Activated CD4-positive, alpha-beta memory T cell treated with anti-CD3 and anti-CD28 coated beads for 36 hours (primary cell): ENCODE measurements at regions of chr1 and their contacts with region 1.

Region 1: GRCh38 chr1:24586970-24587820 is 31.3 kb downstream of the NCMAP start:
- DNase-seq: peak; percentile 49
- H3K4me3 Mint-ChIP-seq: no peak overlapping the region
- H3K27ac Mint-ChIP-seq: peak overlapping the region; percentile 31
- H3K4me1 Mint-ChIP-seq: peaks cover 5% of the 10 kb centered on the region
- H3K27me3 Mint-ChIP-seq: peaks cover 2% of the 10 kb centered on the region

Region 2: DNA sequence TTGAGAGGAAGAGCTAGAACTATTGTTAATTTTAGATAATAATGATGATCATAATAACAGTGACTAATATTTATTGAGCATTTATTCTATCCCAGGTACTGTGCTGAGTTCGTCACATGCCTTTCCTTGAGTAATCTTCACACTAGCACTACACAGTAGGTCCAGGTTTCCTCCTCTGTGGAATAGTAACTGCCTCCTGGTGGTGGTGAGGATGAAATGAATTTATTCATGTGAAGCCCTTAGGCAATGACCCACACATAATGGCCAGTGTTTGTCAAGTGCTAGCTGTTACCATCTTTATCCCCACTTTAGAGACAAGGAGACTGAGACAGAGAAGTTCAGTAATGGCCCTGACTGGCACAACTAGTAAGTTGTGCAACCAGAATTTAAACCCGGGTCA is 165.7 kb before region 1 on chr1:
- CTCF ChIA-PET with region 1: interaction called, 107 read pairs
- POLR2A ChIA-PET with region 1: no interaction called
- intact Hi-C with region 1: no loop called
- DNase-seq: no peak
- H3K4me3 Mint-ChIP-seq: no peak overlapping the region
- H3K27ac Mint-ChIP-seq: no peak overlapping the region
- H3K4me1 Mint-ChIP-seq: peaks cover 66% of the 10 kb centered on the region
- H3K27me3 Mint-ChIP-seq: no peaks in the 10 kb centered on the region

Region 3: DNA sequence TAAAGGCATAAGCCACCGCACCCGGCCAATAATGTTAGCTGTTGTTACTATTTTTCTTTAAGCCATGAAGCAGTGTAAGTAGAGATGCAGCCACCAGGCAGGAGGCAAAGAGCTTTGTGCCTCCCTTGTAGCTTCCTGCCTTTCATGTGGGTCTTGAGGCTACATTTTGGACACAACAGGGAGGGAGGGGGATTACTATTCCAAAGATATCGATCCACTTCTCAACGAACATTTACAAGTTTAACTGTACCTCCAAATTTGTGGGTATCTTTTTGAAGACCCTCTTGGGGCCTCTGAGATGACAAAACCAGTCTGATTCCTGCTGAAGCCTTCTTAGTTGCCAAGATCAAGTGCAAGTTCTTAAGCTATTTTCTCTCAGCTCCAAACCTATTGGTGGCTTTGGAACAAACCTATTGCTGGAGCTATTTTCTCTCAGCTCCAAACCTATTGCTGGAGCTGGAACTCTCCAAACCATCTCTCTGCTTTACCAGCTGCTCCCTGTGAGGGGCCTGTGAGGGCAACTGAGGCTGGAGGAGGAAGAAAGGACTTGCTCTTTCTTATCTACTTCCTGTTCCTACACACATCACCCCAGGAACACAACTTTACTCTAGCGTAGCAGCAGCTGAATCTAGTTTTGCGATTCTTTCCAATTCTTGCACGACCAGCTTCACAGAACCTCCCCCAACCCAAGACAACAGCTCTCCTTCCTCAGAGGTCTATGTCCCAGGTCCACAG is 100.7 kb before region 1 on chr1:
- CTCF ChIA-PET with region 1: interaction called, 14 read pairs
- POLR2A ChIA-PET with region 1: no interaction called
- intact Hi-C with region 1: no loop called
- DNase-seq: peak; percentile 47
- H3K4me3 Mint-ChIP-seq: peak overlapping the region; percentile 72
- H3K27ac Mint-ChIP-seq: peak overlapping the region; percentile 95
- H3K4me1 Mint-ChIP-seq: peaks cover 78% of the 10 kb centered on the region
- H3K27me3 Mint-ChIP-seq: no peaks in the 10 kb centered on the region

Region 4: DNA sequence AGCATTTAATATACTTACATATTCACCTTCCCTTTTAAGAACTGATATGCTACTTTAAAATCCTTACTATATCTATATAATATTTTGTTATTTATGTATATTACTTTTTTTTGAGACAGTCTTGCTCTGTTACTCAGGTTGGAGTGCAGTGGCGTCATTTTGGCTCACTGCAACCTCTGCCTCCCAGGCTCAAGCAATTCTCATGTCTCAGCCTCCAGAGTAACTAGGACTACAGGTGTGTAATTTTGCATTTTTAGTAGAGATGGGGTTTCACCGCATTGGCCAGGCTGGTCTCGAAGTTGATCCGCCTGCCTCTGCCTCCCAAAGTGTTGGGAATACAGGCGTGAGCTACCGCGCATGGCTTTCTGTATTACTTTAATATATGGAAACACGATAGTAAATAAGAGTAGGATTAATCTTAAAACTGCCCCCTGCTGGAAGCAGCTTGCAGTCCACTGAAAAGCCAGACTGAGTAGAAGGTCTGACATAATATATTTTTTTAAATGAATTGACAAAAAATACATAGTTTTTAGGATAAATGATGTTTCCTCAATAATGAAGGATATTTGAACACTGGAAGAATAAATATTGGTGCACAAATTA is 60.2 kb before region 1 on chr1:
- CTCF ChIA-PET with region 1: interaction called, 21 read pairs
- POLR2A ChIA-PET with region 1: no interaction called
- intact Hi-C with region 1: no loop called
- DNase-seq: peak; percentile 58
- H3K4me3 Mint-ChIP-seq: no peak overlapping the region
- H3K27ac Mint-ChIP-seq: no peak overlapping the region
- H3K4me1 Mint-ChIP-seq: peaks cover 57% of the 10 kb centered on the region
- H3K27me3 Mint-ChIP-seq: no peaks in the 10 kb centered on the region

Region 5: GRCh38 chr1:24562625-24563024 is 24.6 kb before region 1 on chr1:
- CTCF ChIA-PET with region 1: interaction called, 19 read pairs
- POLR2A ChIA-PET with region 1: no interaction called
- intact Hi-C with region 1: no loop called
- DNase-seq: no peak
- H3K4me3 Mint-ChIP-seq: no peak overlapping the region
- H3K27ac Mint-ChIP-seq: no peak overlapping the region
- H3K4me1 Mint-ChIP-seq: peaks cover 5% of the 10 kb centered on the region
- H3K27me3 Mint-ChIP-seq: peaks cover 3% of the 10 kb centered on the region

Region 6: GRCh38 chr1:24635195-24635843 is 48.1 kb after region 1 on chr1:
- CTCF ChIA-PET with region 1: interaction called, 9 read pairs
- POLR2A ChIA-PET with region 1: no interaction called
- intact Hi-C with region 1: loop called (anchors 5 kb)
- DNase-seq: no peak
- H3K4me3 Mint-ChIP-seq: no peak overlapping the region
- H3K27ac Mint-ChIP-seq: peak overlapping the region; percentile 25
- H3K4me1 Mint-ChIP-seq: peaks cover 14% of the 10 kb centered on the region
- H3K27me3 Mint-ChIP-seq: peaks cover 2% of the 10 kb centered on the region